A673 (cell line): ENCODE measurements at regions of chrX and their contacts with region 1.

Region 1: GRCh38 chrX:37745354-37745753 is 34.5 kb upstream of the CYBB start:
- DNase-seq: peak; percentile 85
- H3K4me3 ChIP-seq: no peak overlapping the region
- H3K27ac ChIP-seq: no peak overlapping the region
- H3K4me1 ChIP-seq: peaks cover 4% of the 10 kb centered on the region
- H3K27me3 ChIP-seq: no peaks in the 10 kb centered on the region
- CTCF ChIP-seq: peak; percentile 88

Region 2: GRCh38 chrX:37509349-37509748 is 236.0 kb before region 1 on chrX:
- CTCF ChIA-PET with region 1: no interaction called
- POLR2A ChIA-PET with region 1: no interaction called
- intact Hi-C with region 1: loop called (anchors 10 kb)
- DNase-seq: peak; percentile 27
- H3K4me3 ChIP-seq: no peak overlapping the region
- H3K27ac ChIP-seq: no peak overlapping the region
- H3K4me1 ChIP-seq: no peaks in the 10 kb centered on the region
- H3K27me3 ChIP-seq: no peaks in the 10 kb centered on the region
- CTCF ChIP-seq: peak; percentile 52

Region 3: DNA sequence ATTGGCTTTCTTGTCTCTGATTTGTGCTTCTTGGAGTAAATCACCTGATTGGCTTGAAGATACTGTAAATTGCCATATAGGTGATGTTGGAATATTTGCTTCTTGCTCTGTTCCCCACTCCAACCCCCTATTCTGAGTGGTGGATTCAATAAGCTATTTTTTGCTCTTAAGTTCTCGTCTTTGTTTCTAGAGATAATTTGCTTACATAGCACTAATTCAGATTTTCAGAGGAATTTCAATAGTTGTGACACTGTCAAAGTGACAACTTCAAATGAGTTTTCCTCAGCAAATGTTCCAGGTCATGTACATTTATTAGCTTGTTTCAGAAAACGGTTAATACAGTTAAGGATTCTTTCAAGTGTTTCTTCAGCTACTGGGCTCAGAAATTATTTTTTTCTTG is 155.3 kb before region 1 on chrX:
- CTCF ChIA-PET with region 1: no interaction called
- POLR2A ChIA-PET with region 1: no interaction called
- intact Hi-C with region 1: no loop called
- DNase-seq: no peak
- H3K4me3 ChIP-seq: no peak overlapping the region
- H3K27ac ChIP-seq: no peak overlapping the region
- H3K4me1 ChIP-seq: no peaks in the 10 kb centered on the region
- H3K27me3 ChIP-seq: no peaks in the 10 kb centered on the region
- CTCF ChIP-seq: no peak

Region 4: DNA sequence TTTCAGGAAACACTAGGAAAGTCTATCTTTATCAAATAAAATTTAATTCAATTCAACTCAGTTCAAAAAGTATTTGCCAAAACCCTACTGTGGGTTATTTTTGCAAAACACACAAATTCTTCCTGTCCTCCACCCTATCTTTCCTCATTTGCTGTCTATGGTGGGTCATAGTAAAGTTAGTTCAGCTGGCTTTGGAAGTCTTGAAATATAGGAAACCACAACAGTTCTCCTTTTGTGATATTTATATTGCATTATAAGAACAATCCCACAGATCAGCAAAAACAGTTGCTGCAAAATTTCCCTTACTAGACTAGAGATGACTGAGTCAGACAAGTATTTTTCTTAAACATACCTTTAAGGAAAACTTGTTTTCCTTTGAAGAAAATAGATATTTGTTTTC is 56.7 kb after region 1 on chrX:
- CTCF ChIA-PET with region 1: no interaction called
- POLR2A ChIA-PET with region 1: no interaction called
- intact Hi-C with region 1: no loop called
- DNase-seq: no peak
- H3K4me3 ChIP-seq: no peak overlapping the region
- H3K27ac ChIP-seq: no peak overlapping the region
- H3K4me1 ChIP-seq: no peaks in the 10 kb centered on the region
- H3K27me3 ChIP-seq: no peaks in the 10 kb centered on the region
- CTCF ChIP-seq: no peak

Region 5: DNA sequence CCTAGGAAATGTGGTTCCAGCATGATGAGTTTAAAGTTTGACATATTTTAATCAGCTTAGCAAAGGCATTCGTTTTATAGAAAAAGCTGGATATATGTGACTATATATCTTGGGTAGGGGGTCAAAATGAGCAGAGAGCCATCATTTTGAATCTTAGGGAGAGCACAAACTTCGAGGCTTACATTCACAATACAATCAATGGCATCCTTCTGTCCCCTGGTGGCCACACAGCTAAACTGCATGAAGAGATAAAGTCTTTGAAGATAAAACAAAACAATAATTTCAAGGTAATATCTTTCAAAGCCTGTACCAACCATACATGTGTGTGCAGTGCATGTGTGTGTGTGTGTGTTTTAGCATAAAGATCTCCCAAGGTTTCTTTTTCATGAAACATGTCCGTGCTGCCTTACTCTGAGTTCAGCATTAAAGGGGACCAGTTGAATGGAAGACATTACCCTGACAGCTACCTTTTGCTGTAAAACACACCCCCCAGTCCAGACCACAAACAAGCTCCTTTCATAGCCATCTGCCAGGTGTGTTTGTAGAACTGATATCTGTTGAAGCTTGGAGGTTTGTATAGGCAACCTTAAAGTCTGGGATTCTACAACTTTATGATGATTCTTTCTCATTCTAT is 80.0 kb after region 1 on chrX:
- CTCF ChIA-PET with region 1: interaction called, 6 read pairs
- POLR2A ChIA-PET with region 1: no interaction called
- intact Hi-C with region 1: loop called (anchors 1 kb)
- DNase-seq: peak; percentile 56
- H3K4me3 ChIP-seq: no peak overlapping the region
- H3K27ac ChIP-seq: no peak overlapping the region
- H3K4me1 ChIP-seq: no peaks in the 10 kb centered on the region
- H3K27me3 ChIP-seq: no peaks in the 10 kb centered on the region
- CTCF ChIP-seq: peak; percentile 89

Region 6: GRCh38 chrX:37905436-37906147 is 160.2 kb after region 1 on chrX:
- CTCF ChIA-PET with region 1: interaction called, 3 read pairs
- POLR2A ChIA-PET with region 1: no interaction called
- intact Hi-C with region 1: loop called (anchors 5 kb)
- DNase-seq: peak; percentile 90
- H3K4me3 ChIP-seq: peak overlapping the region; percentile 66
- H3K27ac ChIP-seq: peak overlapping the region; percentile 18
- H3K4me1 ChIP-seq: peaks cover 4% of the 10 kb centered on the region
- H3K27me3 ChIP-seq: no peaks in the 10 kb centered on the region
- CTCF ChIP-seq: peak; percentile 61

Region 7: DNA sequence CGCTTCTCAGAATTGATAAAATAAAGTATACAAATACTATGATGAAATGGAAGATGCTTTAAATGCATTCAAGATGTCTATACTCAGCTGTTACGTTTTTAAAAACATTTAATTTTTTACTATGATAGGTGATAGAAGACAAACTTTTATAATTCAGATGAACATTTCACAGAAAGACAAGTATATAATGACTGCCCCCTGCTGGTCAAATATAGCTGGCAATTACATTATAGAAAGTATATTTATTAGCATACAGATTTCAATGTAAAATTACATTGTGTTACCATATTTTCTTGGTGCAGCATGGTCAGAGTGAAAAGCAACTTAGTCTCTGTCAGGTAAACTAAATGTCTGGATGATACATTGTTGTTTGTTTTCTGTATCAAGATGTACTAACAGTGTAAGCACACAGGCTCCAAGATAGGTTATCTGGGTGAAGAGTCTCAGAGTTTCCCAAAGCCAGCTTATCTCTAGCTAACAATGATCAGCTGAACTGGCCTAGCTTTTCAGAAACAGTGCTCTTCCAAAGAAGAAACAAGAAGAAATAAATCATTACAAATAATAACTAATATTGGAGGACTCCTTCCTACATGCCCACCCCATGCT is 421.2 kb after region 1 on chrX:
- CTCF ChIA-PET with region 1: interaction called, 12 read pairs
- POLR2A ChIA-PET with region 1: no interaction called
- intact Hi-C with region 1: no loop called
- DNase-seq: peak; percentile 54
- H3K4me3 ChIP-seq: no peak overlapping the region
- H3K27ac ChIP-seq: no peak overlapping the region
- H3K4me1 ChIP-seq: no peaks in the 10 kb centered on the region
- H3K27me3 ChIP-seq: no peaks in the 10 kb centered on the region
- CTCF ChIP-seq: peak; percentile 79

Region 8: DNA sequence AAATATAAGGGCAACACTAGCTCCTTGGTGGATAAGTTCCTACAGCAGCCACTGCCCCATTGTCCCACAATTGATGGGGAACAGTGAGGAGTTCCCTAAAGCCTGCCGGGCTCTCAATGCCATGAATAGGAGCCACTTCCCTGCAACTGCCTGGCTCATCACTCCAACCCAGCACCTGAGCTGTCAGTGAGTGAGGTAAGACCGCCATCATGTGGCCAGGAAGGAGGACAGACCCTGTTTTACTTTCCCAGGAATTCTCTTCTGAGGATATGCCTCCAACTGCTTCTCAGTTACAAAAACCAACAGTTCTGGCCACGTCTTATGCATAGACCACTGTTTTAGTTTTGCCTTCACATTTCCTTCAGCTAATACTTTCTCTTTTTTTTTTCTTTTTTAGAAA is 429.8 kb after region 1 on chrX:
- CTCF ChIA-PET with region 1: interaction called, 9 read pairs
- POLR2A ChIA-PET with region 1: no interaction called
- intact Hi-C with region 1: loop called (anchors 2 kb)
- DNase-seq: peak; percentile 72
- H3K4me3 ChIP-seq: no peak overlapping the region
- H3K27ac ChIP-seq: no peak overlapping the region
- H3K4me1 ChIP-seq: no peaks in the 10 kb centered on the region
- H3K27me3 ChIP-seq: no peaks in the 10 kb centered on the region
- CTCF ChIP-seq: peak; percentile 67